ENCODE measurements at regions of chr17 and their contacts with region 1.

Region 1: GRCh38 chr17:74659898-74660297 is 36.4 kb upstream of the CD300E start:
- DNase-seq: no peak
- H3K4me3 Mint-ChIP-seq: no peak overlapping the region
- H3K27ac Mint-ChIP-seq: no peak overlapping the region
- H3K4me1 Mint-ChIP-seq: no peaks in the 10 kb centered on the region
- H3K27me3 Mint-ChIP-seq: peaks cover 100% of the 10 kb centered on the region
- CTCF ChIP-seq: no peak

Region 2: DNA sequence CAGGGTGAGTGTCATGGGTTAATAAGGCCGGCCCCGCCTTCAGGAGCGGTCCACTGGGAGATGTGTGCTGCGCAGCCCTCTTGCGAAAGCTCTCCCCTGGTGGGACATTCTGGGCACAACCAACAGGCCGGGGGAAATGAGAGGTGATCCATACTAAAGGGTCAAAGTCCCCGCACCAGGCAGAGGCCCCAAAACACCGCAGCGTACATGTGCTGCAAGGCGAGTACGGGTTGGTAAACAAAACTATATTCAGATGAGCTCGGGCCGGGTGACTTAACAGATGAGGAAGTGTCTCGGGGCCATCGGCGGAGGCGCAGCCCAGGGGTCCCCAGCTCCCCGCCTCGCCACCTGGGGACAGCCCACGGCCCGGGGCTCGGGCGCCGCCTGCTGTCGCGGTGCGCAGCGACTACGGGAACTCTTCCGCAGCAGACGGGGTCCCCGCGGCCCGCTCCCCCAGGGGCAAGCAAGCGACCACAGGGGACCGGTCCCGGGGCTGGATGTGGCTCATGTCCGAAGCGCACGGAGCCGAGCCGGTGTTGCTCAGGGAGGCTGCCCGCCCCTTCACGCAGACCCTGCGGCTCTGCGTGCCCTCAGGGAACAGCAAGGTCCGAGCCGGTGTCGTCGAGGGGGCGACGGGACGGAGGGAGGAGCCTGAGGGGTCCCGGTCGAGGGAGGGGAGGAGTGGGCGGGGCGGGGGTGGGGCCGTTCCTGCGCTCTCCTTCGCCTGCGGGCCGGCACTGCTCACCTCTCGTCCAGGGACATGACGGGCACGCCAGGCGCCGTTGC is 76.8 kb after region 1 on chr17 and contains the start of gene RAB37:
- CTCF ChIA-PET with region 1: interaction called, 102 read pairs
- intact Hi-C with region 1: loop called (anchors 1 kb)
- DNase-seq: peak; percentile 52
- H3K4me3 Mint-ChIP-seq: peak within 1 kb of the TSS; percentile 44
- H3K27ac Mint-ChIP-seq: no peak within 1 kb of the TSS
- H3K4me1 Mint-ChIP-seq: peaks cover 18% of the 10 kb centered on the region
- H3K27me3 Mint-ChIP-seq: peaks cover 51% of the 10 kb centered on the region
- CTCF ChIP-seq: peak; percentile 38
- total RNA-seq, gene RAB37: 0.21 TPM in 1 of 2 replicates, not detected in the other

Region 3: GRCh38 chr17:74748529-74749365 is 88.8 kb after region 1 on chr17 and contains the start of gene NHERF1:
- CTCF ChIA-PET with region 1: interaction called, 18 read pairs
- intact Hi-C with region 1: no loop called
- DNase-seq: peak; percentile 98
- H3K4me3 Mint-ChIP-seq: peak within 1 kb of the TSS; percentile 97
- H3K27ac Mint-ChIP-seq: peak within 1 kb of the TSS; percentile 83
- H3K4me1 Mint-ChIP-seq: peaks cover 39% of the 10 kb centered on the region
- H3K27me3 Mint-ChIP-seq: peaks cover 8% of the 10 kb centered on the region
- CTCF ChIP-seq: no peak
- total RNA-seq, gene NHERF1: 114 and 143 TPM in 2 replicates

Region 4: DNA sequence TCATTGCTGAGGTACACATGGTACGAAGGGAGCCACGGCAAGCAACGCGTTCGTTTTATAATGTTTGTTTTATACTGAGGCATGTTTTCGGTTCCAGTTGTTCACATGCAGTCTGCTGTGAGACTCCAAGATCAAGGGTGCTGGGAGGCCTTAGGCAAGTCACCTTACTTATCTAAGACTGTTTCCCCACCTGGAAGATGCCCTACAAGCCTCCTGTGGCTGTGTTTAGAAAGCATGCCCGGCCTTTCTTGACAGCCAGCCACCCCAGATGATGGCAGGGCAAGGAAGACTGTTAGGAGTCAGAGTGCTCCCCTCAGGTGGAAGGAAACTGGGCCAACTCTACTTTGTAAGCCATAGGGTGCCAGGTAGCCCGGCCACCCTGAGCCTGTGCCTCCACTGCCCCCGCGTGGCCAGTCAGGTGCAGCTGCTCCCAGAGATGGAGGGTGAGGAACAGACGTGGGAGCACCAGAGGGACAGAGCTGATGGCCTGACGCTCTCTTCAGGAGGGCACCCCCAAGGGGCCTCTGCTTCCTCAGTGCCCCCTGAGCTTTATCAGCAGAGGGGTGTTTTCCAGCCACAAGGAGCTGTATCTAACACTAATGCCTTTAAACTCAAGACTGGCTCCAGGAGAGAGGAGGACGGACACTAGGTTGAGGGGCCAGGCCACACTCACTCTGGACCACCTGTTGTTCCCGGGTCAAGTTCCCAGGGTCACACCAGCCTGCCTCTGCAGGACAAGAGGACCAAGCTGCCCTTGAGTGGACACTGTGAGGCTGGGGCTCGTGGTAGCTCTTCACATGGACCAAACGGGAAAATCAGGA is 110.8 kb after region 1 on chr17:
- CTCF ChIA-PET with region 1: interaction called, 12 read pairs
- intact Hi-C with region 1: no loop called
- DNase-seq: peak; percentile 91
- H3K4me3 Mint-ChIP-seq: no peak overlapping the region
- H3K27ac Mint-ChIP-seq: peak overlapping the region; percentile 67
- H3K4me1 Mint-ChIP-seq: peaks cover 37% of the 10 kb centered on the region
- H3K27me3 Mint-ChIP-seq: no peaks in the 10 kb centered on the region
- CTCF ChIP-seq: peak; percentile 82

Region 5: DNA sequence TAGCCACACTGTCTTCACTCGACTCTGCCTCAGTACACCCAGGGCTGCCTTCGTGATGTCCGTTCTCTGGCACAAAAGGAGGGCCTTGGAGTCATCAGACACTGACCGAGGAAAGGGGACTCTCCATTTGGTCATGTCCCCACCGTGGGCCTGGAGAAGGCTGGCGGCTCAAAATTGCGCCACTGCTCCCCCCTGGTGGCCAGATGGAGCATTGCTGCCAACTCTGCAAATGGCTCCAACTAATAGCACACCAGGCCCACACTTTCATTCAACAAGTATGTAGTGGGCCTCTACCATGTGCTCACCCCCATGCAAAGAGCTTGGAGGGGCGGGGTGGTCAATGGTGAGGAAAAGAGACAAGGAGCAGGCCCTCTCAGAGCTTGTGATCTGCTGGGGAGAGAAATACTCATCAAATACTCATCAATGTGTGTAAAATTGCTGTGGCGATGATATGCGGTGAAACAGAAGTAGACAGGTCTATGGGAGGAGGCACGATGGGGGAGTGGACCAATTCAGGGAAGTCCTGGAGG is 205.0 kb after region 1 on chr17:
- CTCF ChIA-PET with region 1: interaction called, 9 read pairs
- intact Hi-C with region 1: loop called (anchors 10 kb)
- DNase-seq: peak; percentile 83
- H3K4me3 Mint-ChIP-seq: no peak overlapping the region
- H3K27ac Mint-ChIP-seq: no peak overlapping the region
- H3K4me1 Mint-ChIP-seq: peaks cover 7% of the 10 kb centered on the region
- H3K27me3 Mint-ChIP-seq: peaks cover 19% of the 10 kb centered on the region
- CTCF ChIP-seq: peak; percentile 96